BJ (cell line): ENCODE measurements at regions of chr6 and their contacts with region 1.

Region 1: GRCh38 chr6:36678518-36679027 is at the start of gene CDKN1A:
- DNase-seq: peak; percentile 77
- H3K4me3 ChIP-seq: peak within 1 kb of the TSS; percentile 79
- H3K27me3 ChIP-seq: no peaks in the 10 kb centered on the region
- CTCF ChIP-seq: no peak
- polyA plus RNA-seq, gene CDKN1A: 698 and 820 TPM in 2 replicates

Region 2: GRCh38 chr6:36615018-36615761 is 63.4 kb before region 1 on chr6:
- CTCF ChIA-PET with region 1: interaction called, 15 read pairs
- POLR2A ChIA-PET with region 1: no interaction called
- DNase-seq: no peak
- H3K4me3 ChIP-seq: no peak overlapping the region
- H3K27me3 ChIP-seq: no peaks in the 10 kb centered on the region
- CTCF ChIP-seq: peak; percentile 79

Region 3: DNA sequence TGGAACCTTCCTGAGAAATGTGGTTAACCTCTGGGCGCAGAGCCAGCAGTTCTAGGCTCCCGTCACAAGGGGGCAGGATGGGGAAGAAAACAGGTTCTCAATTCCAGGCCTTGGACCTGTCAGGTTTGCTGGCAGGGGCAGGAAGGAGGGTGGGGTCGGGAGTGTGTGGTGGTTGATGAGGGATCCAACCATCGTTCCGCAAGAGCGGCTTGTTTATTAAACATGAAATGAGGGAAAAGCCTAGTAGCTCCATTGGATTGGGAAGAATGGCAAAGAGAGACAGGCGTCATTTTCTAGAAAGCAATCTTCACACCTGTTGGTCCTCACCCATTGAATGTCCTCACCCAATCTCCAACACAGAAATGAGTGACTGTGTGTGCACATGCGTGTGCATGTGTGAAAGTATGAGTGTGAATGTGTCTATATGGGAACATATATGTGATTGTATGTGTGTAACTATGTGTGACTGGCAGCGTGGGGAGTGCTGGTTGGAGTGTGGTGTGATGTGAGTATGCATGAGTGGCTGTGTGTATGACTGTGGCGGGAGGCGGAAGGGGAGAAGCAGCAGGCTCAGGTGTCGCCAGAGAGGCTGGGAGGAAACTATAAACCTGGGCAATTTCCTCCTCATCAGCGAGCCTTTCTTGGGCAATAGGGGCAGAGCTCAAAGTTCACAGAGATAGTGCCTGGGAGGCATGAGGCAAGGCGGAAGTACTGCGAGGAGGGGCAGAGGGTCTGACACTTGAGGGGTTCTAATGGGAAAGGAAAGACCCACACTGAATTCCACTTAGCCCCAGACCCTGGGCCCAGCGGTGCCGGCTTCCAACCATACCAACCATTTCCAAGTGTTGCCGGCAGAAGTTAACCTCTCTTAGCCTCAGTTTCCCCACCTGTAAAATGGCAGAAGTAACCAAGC is 54.8 kb before region 1 on chr6:
- CTCF ChIA-PET with region 1: interaction called, 32 read pairs
- POLR2A ChIA-PET with region 1: interaction called, 3 read pairs
- DNase-seq: no peak
- H3K4me3 ChIP-seq: no peak overlapping the region
- H3K27me3 ChIP-seq: no peaks in the 10 kb centered on the region
- CTCF ChIP-seq: peak; percentile 90

Region 4: GRCh38 chr6:36633915-36634314 is 44.7 kb before region 1 on chr6:
- CTCF ChIA-PET with region 1: no interaction called
- POLR2A ChIA-PET with region 1: interaction called, 13 read pairs
- DNase-seq: no peak
- H3K4me3 ChIP-seq: no peak overlapping the region
- H3K27me3 ChIP-seq: no peaks in the 10 kb centered on the region
- CTCF ChIP-seq: no peak

Region 5: GRCh38 chr6:36666726-36667591 is 11.6 kb before region 1 on chr6:
- CTCF ChIA-PET with region 1: interaction called, 6 read pairs
- POLR2A ChIA-PET with region 1: interaction called, 28 read pairs
- DNase-seq: peak; percentile 57
- H3K4me3 ChIP-seq: no peak overlapping the region
- H3K27me3 ChIP-seq: no peaks in the 10 kb centered on the region
- CTCF ChIP-seq: no peak

Region 6: DNA sequence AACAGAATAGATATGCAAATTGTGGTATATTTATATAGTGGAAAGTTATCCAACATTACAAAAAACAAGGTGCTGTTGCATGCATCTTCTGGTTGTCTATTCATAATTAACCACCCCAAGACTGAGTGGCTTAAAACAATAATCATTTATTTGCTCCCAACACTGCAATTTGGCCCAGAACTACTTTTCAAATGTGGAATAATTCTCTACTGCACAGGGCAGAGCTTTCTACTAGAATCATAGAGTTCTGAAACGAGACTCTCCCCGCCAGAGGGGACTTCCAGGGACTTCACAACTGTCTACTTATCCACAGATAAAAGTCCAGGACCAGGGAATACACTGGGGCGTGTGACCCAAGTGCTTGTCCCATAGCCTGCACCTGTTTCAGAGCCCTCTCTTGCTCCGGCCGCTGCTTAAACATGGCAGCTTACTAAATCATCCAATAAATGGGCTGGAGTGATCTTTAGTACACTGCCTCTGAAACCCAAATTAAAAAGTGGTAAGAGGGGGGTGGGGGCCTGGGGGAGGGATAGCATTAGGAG is 10.0 kb after region 1 on chr6:
- CTCF ChIA-PET with region 1: interaction called, 4 read pairs
- POLR2A ChIA-PET with region 1: interaction called, 20 read pairs
- DNase-seq: no peak
- H3K4me3 ChIP-seq: no peak overlapping the region
- H3K27me3 ChIP-seq: no peaks in the 10 kb centered on the region
- CTCF ChIP-seq: no peak

Region 7: GRCh38 chr6:36724514-36725390 is 46.2 kb after region 1 on chr6:
- CTCF ChIA-PET with region 1: interaction called, 13 read pairs
- POLR2A ChIA-PET with region 1: interaction called, 4 read pairs
- DNase-seq: no peak
- H3K4me3 ChIP-seq: no peak overlapping the region
- H3K27me3 ChIP-seq: no peaks in the 10 kb centered on the region; the same call in none of the 2 replicates
- CTCF ChIP-seq: peak; percentile 70